BJ (cell line): ENCODE measurements at regions of chr1 and their contacts with region 1.

Region 1: DNA sequence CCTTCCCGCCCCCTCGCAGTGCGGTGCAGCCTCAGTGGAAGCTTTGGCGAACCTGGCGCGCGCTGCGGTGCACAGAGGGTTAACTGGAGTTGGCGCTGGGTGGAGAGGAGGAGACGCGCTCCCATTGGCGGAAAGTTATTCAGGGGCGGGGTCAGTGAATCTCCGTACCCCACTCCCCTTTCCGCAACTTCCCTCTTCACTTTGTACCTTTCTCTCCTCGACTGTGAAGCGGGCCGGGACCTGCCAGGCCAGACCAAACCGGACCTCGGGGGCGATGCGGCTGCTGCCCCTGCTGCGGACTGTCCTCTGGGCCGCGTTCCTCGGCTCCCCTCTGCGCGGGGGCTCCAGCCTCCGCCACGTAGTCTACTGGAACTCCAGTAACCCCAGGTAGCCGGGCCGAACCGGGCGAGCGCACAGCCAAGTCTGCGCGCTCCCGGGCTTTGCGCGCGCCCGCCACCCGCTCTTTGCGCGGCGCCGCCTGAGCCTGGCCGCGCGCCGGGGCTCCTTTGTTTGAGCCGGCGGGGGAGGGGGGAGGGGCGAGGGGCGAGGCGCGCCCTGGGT is at the start of gene EFNA4:
- DNase-seq: no peak
- H3K4me3 ChIP-seq: peak within 1 kb of the TSS; percentile 78
- H3K27me3 ChIP-seq: no peaks in the 10 kb centered on the region
- CTCF ChIP-seq: no peak
- polyA plus RNA-seq, gene EFNA4: 6.6 and 12.4 TPM in 2 replicates

Region 2: DNA sequence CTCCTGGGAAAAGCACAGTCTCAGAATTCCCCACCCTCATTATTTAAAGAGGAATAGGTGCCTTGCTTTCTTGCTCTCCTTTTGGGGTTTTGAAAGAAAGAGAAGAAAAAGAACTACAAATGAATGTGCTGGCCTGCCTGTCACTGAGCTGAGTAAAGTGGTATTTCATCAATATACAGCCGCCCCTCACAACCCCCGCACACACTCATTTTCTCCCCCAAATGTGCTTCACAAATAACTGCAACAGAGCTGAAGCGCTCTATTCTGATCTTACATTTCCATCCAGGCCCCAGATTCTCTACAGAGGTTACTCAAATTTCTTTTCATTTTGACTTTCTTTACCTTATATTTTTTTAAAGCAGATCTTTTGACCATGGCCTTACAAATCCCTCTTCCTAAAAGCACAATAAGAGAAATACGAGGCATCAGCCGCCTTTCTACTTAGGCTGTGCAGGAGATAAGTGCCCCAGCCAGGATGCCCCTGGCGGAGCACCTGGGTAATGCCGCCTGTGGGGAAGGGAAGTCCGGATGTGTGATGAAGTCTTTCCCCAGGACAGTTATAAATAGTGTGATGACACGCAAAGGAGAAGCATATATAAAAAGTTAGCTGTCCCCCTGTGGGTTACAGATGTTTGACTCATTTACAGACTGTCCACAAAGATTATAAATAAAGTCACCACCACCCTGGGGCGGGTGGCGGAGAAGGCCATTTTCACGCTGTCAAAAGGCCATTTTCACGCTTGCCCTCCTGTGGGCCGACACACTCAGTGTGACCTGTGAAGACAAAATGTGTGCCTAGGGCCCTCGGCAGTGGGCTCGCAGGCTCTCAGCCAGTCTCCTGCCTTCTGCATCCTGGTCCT is 200.1 kb before region 1 on chr1:
- CTCF ChIA-PET with region 1: no interaction called
- POLR2A ChIA-PET with region 1: no interaction called
- DNase-seq: no peak
- H3K4me3 ChIP-seq: no peak overlapping the region
- H3K27me3 ChIP-seq: peaks cover 21% of the 10 kb centered on the region
- CTCF ChIP-seq: peak; percentile 33

Region 3: DNA sequence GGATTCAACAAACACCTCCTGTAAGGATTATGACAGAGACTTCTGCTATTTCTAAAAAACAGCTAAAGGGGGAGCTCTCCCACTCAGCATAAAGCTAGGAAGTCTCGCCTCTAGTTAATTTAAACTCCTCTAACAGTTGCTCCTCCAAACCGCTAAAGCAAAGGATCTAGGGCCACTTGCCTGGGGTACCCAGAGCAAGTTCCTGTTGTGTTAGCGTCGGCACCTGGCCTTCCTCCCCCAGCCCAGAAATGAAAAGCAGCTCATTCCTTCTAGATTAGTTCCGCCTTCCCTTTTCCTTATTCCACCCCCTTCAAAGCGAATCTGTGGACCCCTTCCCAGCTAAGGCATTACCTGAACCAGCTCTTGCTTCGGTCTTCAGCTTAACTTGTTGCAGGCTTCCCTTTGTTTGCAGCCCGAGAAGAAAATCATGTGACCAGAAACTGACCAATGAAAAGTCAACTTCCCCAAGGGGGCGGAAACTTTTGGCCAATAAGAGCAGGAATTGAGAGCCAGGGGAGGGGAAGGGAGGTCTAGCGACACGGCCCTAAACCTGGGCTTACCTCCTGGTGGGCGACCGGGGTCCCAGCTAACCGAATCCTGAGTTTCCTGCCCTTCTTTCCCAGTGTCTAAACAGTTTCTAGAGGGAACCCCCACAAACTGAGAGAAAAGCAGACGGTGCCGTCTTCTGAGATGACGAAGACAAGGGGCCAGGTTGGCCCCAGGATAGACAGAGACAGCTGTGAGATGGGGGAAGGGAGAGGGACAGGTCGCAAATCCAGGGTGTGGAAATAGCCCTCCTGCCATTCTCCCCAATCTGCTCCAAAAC is 107.7 kb before region 1 on chr1 and contains the start of gene PBXIP1:
- CTCF ChIA-PET with region 1: interaction called, 10 read pairs
- POLR2A ChIA-PET with region 1: no interaction called
- DNase-seq: peak; percentile 80
- H3K4me3 ChIP-seq: peak within 1 kb of the TSS; percentile 52
- H3K27me3 ChIP-seq: no peaks in the 10 kb centered on the region
- CTCF ChIP-seq: peak; percentile 47
- polyA plus RNA-seq, gene PBXIP1: 65.6 and 83.1 TPM in 2 replicates

Region 4: GRCh38 chr1:155044812-155045690 is 18.6 kb before region 1 on chr1:
- CTCF ChIA-PET with region 1: interaction called, 168 read pairs
- POLR2A ChIA-PET with region 1: no interaction called
- DNase-seq: no peak
- H3K4me3 ChIP-seq: no peak overlapping the region
- H3K27me3 ChIP-seq: no peaks in the 10 kb centered on the region; the same call in 1 of the 2 replicates
- CTCF ChIP-seq: peak; percentile 83

Region 5: DNA sequence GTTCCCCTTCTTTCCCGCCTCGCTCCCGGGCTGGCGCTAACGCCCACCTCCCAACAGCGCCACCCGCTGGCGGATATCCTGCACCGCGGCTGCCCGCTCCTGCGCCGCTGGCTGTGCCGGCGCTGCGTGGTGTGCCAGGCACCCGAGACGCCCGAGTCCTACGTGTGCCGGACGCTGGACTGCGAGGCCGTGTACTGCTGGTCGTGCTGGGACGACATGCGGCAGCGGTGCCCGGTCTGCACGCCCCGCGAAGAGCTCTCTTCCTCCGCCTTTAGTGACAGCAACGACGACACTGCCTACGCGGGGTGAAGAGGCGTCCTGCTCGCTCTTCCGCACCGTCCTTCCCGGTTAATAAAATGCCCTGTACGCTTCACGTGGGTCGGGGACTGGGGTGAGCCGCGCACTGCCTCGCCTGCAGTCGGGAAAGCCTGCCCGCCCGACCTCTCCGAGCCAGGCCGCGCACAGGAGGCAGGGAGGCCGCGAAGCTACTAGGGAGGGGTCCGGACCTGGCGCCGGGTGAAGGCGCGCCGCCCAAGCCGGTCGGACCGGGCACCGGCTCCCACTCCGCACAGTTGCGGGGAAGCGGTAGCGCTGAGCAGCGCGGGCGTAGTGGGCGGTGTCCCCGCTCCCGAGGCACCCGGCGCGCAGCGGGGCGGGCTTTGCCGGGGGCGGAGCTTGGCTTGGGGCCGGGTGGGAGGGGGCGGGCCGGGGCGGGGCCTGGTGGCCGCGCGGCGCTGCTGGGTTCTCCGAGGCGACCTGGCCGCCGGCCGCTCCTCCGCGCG is 12.9 kb before region 1 on chr1 and contains the start of gene ADAM15:
- CTCF ChIA-PET with region 1: interaction called, 168 read pairs
- POLR2A ChIA-PET with region 1: interaction called, 4 read pairs
- DNase-seq: no peak
- H3K4me3 ChIP-seq: peak within 1 kb of the TSS; percentile 68
- H3K27me3 ChIP-seq: no peaks in the 10 kb centered on the region
- CTCF ChIP-seq: peak; percentile 87
- polyA plus RNA-seq, gene ADAM15: 55.1 and 88.8 TPM in 2 replicates